A673 (cell line): ENCODE measurements at regions of chr2 and their contacts with region 1.

Region 1: GRCh38 chr2:192286093-192286701 is 91.5 kb upstream of the TMEFF2 start:
- DNase-seq: peak; percentile 75
- H3K4me3 ChIP-seq: no peak overlapping the region
- H3K27ac ChIP-seq: no peak overlapping the region
- H3K4me1 ChIP-seq: no peaks in the 10 kb centered on the region
- H3K27me3 ChIP-seq: no peaks in the 10 kb centered on the region
- CTCF ChIP-seq: peak; percentile 67

Region 2: GRCh38 chr2:191677646-191678436 is 608.4 kb before region 1 on chr2 and contains the start of gene NABP1:
- CTCF ChIA-PET with region 1: no interaction called
- POLR2A ChIA-PET with region 1: no interaction called
- intact Hi-C with region 1: no loop called
- DNase-seq: peak; percentile 98
- H3K4me3 ChIP-seq: peak within 1 kb of the TSS; percentile 80
- H3K27ac ChIP-seq: peak within 1 kb of the TSS; percentile 91
- H3K4me1 ChIP-seq: peaks cover 48% of the 10 kb centered on the region
- H3K27me3 ChIP-seq: no peaks in the 10 kb centered on the region
- CTCF ChIP-seq: no peak
- total RNA-seq, gene NABP1: 33.2 and 38.4 TPM in 2 replicates

Region 3: DNA sequence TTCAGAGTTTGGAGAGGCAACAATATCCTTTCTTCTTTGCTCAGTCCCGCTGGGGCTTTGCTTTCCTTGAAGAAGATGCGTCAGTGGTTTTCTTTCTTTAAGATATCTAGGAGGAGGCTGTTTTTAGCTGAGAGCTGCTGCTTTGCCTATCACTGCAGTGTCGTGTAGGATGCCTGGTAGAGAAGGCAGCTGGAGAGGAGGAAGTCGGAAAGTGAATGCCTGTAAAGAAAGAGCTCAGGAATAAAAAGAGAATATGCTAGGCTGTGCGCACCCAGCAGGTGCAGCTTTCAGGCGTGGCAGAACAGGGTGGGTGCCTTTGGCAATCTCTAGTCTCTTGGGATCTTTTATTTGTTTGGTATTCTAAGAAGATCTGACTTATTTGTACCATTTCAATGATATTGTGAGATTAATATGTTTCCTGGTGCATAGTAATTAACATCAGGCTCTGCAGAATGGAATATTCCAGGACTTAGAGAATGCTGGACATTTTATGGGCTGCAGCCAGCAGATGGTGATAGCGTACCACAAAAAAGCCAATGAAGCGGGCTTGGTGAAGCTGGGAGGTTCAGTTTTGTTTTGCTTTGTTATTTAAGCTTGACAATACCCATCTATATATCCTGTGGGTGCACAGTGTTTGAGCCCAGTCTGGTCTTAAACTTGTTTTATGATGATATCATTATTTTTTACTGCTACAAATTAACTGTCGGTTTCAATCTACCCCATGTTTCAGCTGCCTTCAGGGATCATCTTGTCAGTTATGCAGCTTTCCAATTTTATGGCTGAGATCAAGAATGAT is 474.2 kb before region 1 on chr2:
- CTCF ChIA-PET with region 1: no interaction called
- POLR2A ChIA-PET with region 1: no interaction called
- intact Hi-C with region 1: loop called (anchors 5 kb)
- DNase-seq: peak; percentile 82
- H3K4me3 ChIP-seq: no peak overlapping the region
- H3K27ac ChIP-seq: no peak overlapping the region
- H3K4me1 ChIP-seq: peaks cover 3% of the 10 kb centered on the region
- H3K27me3 ChIP-seq: no peaks in the 10 kb centered on the region
- CTCF ChIP-seq: peak; percentile 91

Region 4: DNA sequence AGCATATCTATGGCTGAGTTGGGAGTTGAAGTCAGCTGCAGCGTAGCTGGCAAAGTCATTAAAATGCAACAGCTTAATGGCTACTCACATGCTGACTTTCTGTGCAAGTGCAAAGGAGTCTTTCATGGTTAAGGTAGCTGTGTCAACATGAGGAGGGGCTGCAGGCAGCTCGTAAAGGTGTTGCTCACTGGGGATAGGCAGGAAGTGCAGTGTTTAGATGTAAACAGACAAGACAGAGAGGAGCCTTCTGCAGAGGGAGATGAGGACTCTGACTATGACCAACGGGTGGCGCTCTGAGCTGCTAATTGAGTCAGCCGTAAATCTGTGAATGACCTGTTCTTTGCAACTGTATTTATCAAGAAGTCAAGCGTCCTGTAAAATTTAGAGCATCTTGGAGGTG is 417.0 kb before region 1 on chr2:
- CTCF ChIA-PET with region 1: no interaction called
- POLR2A ChIA-PET with region 1: no interaction called
- intact Hi-C with region 1: loop called (anchors 5 kb)
- DNase-seq: peak; percentile 66
- H3K4me3 ChIP-seq: no peak overlapping the region
- H3K27ac ChIP-seq: no peak overlapping the region
- H3K4me1 ChIP-seq: peaks cover 18% of the 10 kb centered on the region
- H3K27me3 ChIP-seq: no peaks in the 10 kb centered on the region
- CTCF ChIP-seq: peak; percentile 63

Region 5: DNA sequence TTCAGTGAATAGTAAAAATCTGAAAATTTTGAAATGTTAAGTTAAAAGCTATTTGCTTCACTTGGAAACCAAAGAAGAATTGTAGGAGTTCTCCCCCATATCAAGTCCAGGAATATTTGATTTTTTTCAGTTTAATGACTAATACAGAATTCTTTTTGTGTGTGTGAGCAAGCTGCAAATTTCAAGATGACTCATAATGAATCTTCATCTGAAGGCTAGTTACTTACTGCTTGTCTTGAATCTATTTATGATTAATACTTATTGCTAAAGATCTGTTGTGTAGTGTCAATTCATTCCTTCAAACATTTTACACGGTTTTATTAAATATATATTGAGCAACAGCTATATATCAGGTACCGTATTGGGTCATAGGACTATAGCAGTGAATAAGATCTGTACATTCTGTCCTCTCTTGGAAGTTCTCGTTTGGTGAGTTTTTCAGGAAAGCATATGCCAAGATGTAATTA is 391.5 kb before region 1 on chr2:
- CTCF ChIA-PET with region 1: no interaction called
- POLR2A ChIA-PET with region 1: no interaction called
- intact Hi-C with region 1: no loop called
- DNase-seq: peak; percentile 21
- H3K4me3 ChIP-seq: no peak overlapping the region
- H3K27ac ChIP-seq: no peak overlapping the region
- H3K4me1 ChIP-seq: peaks cover 4% of the 10 kb centered on the region
- H3K27me3 ChIP-seq: no peaks in the 10 kb centered on the region
- CTCF ChIP-seq: no peak

Region 6: GRCh38 chr2:192035731-192036442 is 250.3 kb before region 1 on chr2:
- CTCF ChIA-PET with region 1: no interaction called
- POLR2A ChIA-PET with region 1: no interaction called
- intact Hi-C with region 1: no loop called
- DNase-seq: peak; percentile 57
- H3K4me3 ChIP-seq: no peak overlapping the region
- H3K27ac ChIP-seq: no peak overlapping the region
- H3K4me1 ChIP-seq: peaks cover 9% of the 10 kb centered on the region
- H3K27me3 ChIP-seq: no peaks in the 10 kb centered on the region
- CTCF ChIP-seq: no peak